ENCODE measurements at regions of chr7 and their contacts with region 1.

Region 1: GRCh38 chr7:30303312-30304039 is 19.1 kb downstream of the ZNRF2 start:
- DNase-seq: no peak
- H3K4me3 ChIP-seq: no peak overlapping the region
- H3K27ac ChIP-seq: no peak overlapping the region
- H3K4me1 ChIP-seq: peaks cover 12% of the 10 kb centered on the region
- H3K27me3 ChIP-seq: no peaks in the 10 kb centered on the region
- CTCF ChIP-seq: no peak

Region 2: DNA sequence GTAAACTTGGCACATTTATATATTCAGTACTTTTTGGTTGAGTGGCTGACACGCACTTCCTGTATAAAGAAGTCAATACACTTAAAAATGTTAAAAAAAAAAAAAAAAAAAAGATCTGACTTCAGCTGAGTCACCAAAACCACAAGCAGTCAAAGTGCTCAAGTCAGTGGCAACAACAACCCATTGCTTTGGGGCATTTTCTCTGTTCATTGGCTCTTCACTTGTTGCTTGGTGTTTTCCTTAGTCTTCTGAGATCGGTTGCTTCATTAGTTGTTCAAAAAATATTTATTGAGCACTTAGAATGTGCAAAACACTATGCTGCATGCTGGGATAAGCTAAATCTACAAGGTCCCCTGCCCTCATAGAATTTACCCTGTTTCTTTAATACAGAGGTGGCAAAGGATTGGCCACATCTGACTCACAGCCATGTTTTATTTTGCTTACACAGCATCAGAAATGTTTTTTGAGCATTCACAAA is 44.6 kb after region 1 on chr7:
- CTCF ChIA-PET with region 1: no interaction called
- dilution Hi-C with region 1: no loop called
- in situ Hi-C with region 1: no loop called
- intact Hi-C with region 1: loop called (anchors 5 kb)
- DNase-seq: peak; percentile 92
- H3K4me3 ChIP-seq: peak overlapping the region in 1 of 3 experiments; percentile 41
- H3K27ac ChIP-seq: peak overlapping the region; percentile 68
- H3K4me1 ChIP-seq: peaks cover 21% of the 10 kb centered on the region
- H3K27me3 ChIP-seq: no peaks in the 10 kb centered on the region
- CTCF ChIP-seq: no peak